Prostate gland (tissue), 2 donors: ENCODE measurements at regions of chr3 and their contacts with region 1.

Region 1: GRCh38 chr3:70531063-70531657 is 218.7 kb upstream of the MDFIC2 start:
- DNase-seq: no peak
- H3K4me3 ChIP-seq: no peak overlapping the region
- H3K27ac ChIP-seq: no peak overlapping the region
- H3K4me1 ChIP-seq: no peaks in the 10 kb centered on the region
- H3K27me3 ChIP-seq: no peaks in the 10 kb centered on the region
- CTCF ChIP-seq: peak in 3 of 4 experiments; percentile 40 to 67 (median 60)
- POLR2A ChIP-seq: no peak

Region 2: GRCh38 chr3:70400194-70400593 is 131.0 kb before region 1 on chr3:
- intact Hi-C with region 1: no loop called
- DNase-seq: no peak
- H3K4me3 ChIP-seq: no peak overlapping the region
- H3K27ac ChIP-seq: no peak overlapping the region
- H3K4me1 ChIP-seq: no peaks in the 10 kb centered on the region
- H3K27me3 ChIP-seq: no peaks in the 10 kb centered on the region
- CTCF ChIP-seq: no peak
- POLR2A ChIP-seq: no peak

Region 3: DNA sequence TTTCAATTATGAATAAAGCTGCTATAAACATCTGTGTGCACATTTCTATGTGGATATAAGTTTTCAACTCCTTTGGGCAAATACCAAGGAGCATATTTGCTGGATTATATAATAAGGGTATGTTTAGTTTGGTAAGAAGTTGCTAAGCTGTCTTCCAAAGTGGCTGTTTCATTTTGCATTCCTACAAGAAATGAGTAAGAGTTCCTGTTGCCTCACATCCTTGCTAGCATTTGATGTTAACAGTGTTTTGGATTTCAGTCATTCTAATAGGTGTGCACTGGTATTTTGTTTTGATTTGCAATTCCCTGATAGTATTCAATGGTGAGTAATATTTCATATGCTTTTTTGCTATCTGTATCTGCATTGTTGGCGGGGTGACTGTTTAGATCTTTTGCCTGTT is 98.1 kb before region 1 on chr3:
- intact Hi-C with region 1: no loop called
- DNase-seq: no peak
- H3K4me3 ChIP-seq: no peak overlapping the region
- H3K27ac ChIP-seq: no peak overlapping the region
- H3K4me1 ChIP-seq: no peaks in the 10 kb centered on the region
- H3K27me3 ChIP-seq: no peaks in the 10 kb centered on the region
- CTCF ChIP-seq: no peak
- POLR2A ChIP-seq: no peak

Region 4: DNA sequence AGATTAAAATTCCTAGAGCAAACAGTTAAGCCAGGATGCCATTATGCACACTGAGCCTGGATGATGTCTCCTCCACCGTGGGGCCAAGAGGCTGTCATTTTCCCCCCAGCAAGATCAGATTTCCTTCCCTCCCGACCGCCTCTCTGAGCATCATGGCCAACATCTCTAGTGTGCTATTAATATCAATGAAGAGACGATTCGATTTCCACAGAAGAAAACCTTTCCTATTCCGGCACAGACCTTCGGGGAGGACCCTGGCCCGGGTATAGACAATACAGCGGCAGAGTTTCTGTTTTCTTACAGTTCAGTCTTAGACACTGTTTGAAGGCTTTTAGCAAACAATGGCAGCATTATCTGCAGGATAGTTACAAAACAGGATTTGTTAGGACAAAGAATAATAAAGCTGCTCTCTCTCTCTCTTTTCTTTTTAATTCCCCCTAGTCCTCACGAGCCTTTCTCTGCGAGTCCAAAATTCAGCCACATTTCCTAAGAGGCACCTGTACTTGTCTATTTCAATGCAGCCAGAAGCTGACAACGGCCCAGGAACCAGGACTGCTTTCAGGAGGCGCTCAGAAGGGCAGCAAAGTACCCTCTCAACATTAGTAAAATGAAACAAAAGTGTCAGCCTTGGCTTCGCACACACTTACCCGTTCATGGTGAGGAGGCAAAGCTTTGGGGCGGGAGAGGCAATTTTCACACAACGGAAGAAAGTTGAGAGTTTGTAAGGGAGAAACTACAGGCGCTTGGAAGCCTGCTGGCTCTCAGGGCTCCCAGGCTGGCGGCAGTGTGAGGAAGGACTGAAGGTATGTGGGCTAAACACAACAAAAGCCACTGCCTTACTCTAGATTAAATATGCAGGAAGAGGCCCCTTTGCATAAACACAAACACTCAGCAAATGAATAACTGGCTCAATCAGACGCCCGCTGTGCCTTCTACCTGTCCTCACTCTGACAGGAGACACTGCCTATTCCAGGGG is 774.4 kb after region 1 on chr3:
- intact Hi-C with region 1: loop called (anchors 10 kb)
- DNase-seq: peak; percentile 35
- H3K4me3 ChIP-seq: peak overlapping the region; percentile 15 to 28
- H3K27ac ChIP-seq: peak overlapping the region; percentile 80 to 83
- H3K4me1 ChIP-seq: no peaks in the 10 kb centered on the region
- H3K27me3 ChIP-seq: no peaks in the 10 kb centered on the region
- CTCF ChIP-seq: no peak
- POLR2A ChIP-seq: no peak